IMR-90 (cell line): ENCODE measurements at regions of chr3 and their contacts with region 1.

Region 1: GRCh38 chr3:10926811-10927521 is 65.6 kb upstream of the SLC6A1 start:
- DNase-seq: no peak
- ATAC-seq: no peak
- H3K4me3 ChIP-seq: no peak overlapping the region
- H3K27ac ChIP-seq: no peak overlapping the region
- H3K4me1 ChIP-seq: no peaks in the 10 kb centered on the region
- H3K27me3 ChIP-seq: peaks cover 14% of the 10 kb centered on the region
- CTCF ChIP-seq: no peak
- POLR2A ChIP-seq: no peak
- RAD21 ChIP-seq: no peak

Region 2: DNA sequence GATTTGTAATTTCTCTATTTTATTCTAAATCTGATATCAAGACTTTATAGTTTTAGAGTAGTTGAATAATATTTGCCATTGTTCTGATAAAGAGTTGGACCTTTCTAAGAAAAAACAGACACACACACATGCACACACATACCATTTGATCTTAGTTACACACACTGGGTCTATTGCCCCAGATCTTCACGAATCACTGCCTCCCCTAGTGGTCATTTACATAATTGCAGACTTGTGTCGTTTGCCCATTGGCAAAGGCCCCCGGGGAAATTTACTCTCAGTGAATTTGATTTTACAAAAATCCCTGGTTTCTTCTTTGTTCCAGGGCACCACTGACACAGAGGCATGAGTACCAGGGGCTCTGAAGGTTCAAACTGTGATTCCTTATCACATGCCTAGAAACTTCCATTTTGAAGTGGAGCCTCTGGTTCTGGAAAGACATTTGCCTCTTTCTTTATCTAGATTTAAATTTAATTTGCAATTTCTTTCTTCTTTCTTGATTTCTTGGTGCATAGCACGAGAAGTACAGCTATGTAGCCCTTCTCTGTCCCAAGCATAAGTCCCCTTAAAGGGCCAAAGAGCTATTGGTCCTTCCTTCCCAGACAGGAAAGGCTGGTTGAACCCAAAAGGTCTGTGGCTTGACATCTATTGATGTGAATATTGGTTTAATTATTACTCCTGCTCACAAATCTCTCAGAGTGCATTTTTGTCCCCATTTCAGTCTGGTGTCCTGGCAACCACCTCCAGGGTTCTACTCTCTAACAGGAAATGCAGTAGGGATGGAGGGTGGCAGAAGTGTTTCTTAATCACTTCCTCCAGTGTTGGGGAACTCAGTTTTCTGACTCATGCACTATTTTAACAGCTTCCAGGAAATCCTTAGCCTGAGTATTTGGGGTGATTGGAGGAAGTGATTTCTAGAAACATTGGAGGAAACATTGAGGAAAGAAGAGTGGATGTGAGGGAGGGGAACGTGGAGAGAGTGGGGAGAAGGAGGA is 143.3 kb before region 1 on chr3:
- CTCF ChIA-PET with region 1: no interaction called
- POLR2A ChIA-PET with region 1: no interaction called
- dilution Hi-C with region 1: no loop called
- in situ Hi-C with region 1: no loop called
- intact Hi-C with region 1: loop called (anchors 10 kb)
- DNase-seq: peak; percentile 22
- ATAC-seq: 0 out of 2 replicates have a peak, but pooled peaks have one; percentile 37
- H3K4me3 ChIP-seq: no peak overlapping the region
- H3K27ac ChIP-seq: no peak overlapping the region
- H3K4me1 ChIP-seq: no peaks in the 10 kb centered on the region
- H3K27me3 ChIP-seq: no peaks in the 10 kb centered on the region
- CTCF ChIP-seq: peak; percentile 55
- POLR2A ChIP-seq: no peak
- RAD21 ChIP-seq: peak; percentile 29; the same call in 1 of the 2 replicates

Region 3: DNA sequence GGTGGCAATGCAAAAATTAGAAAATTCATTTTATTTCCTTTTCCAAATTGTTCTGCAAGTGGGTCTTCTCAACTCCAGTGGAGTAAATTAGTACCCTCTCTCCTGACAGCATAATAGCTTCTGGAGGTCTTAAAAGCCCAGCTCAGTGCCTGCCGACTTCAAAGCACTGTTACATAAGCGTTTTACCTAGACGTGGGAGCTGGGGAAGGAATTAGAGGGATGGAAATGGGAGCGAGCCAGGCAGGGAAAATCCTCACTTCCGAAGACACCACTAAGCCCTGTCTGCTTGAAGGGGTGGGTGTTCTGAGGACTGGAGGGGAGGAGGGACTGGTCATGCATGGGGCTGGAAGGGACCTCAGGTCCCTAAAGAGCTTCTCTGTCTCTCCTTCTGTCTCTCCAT is 11.6 kb before region 1 on chr3:
- CTCF ChIA-PET with region 1: no interaction called
- POLR2A ChIA-PET with region 1: no interaction called
- dilution Hi-C with region 1: no loop called
- in situ Hi-C with region 1: no loop called
- intact Hi-C with region 1: no loop called
- DNase-seq: no peak
- ATAC-seq: no peak
- H3K4me3 ChIP-seq: no peak overlapping the region
- H3K27ac ChIP-seq: no peak overlapping the region
- H3K4me1 ChIP-seq: no peaks in the 10 kb centered on the region
- H3K27me3 ChIP-seq: peaks cover 3% of the 10 kb centered on the region; the same call in 1 of the 2 replicates
- CTCF ChIP-seq: no peak
- POLR2A ChIP-seq: no peak
- RAD21 ChIP-seq: no peak

Region 4: GRCh38 chr3:11770477-11771391 is 843.8 kb after region 1 on chr3:
- CTCF ChIA-PET with region 1: no interaction called
- POLR2A ChIA-PET with region 1: no interaction called
- dilution Hi-C with region 1: no loop called
- in situ Hi-C with region 1: no loop called
- intact Hi-C with region 1: no loop called
- DNase-seq: peak; percentile 87
- ATAC-seq: peak; percentile 93
- H3K4me3 ChIP-seq: no peak overlapping the region
- H3K27ac ChIP-seq: no peak overlapping the region
- H3K4me1 ChIP-seq: peaks cover 4% of the 10 kb centered on the region
- H3K27me3 ChIP-seq: peaks cover 7% of the 10 kb centered on the region
- CTCF ChIP-seq: no peak
- POLR2A ChIP-seq: no peak
- RAD21 ChIP-seq: no peak